ENCODE measurements at regions of chr1 and their contacts with region 1.

Region 1: GRCh38 chr1:16078925-16079656 is 5.6 kb upstream of the FAM131C start:
- DNase-seq: no peak
- H3K4me3 ChIP-seq: no peak overlapping the region
- CTCF ChIP-seq: peak; percentile 96

Region 2: DNA sequence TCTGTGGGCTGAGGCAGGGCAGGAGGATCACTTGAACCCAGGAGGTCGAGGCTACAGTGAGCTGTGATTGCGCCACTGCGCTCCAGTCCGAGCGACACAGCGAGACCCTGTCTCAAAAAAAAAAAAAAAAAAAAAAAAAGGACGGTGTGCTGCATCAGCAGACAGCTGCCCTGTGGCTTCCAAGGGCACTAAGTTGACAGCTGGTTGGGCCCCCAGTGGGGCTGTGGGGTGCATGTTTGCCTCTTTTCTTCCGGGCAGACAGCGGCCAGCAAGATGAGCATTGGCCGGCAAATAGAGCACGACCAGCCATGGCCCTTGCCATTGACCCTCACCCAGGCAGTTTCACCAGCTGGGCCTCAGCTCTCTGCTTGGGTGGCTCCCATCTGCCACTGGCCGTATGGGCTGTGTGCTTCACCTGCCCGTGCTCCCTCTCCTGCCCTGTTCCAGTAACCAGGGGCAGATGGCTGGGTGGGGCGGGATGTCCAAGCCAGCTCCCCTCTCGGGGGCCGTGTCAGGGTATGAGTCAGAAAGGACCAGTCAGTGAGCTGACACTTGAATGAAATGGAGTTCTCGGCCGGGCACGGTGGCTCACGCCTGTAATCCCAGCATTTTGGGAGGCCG is 355.4 kb before region 1 on chr1:
- CTCF ChIA-PET with region 1: no interaction called
- POLR2A ChIA-PET with region 1: no interaction called
- DNase-seq: no peak
- H3K4me3 ChIP-seq: no peak overlapping the region
- CTCF ChIP-seq: no peak

Region 3: DNA sequence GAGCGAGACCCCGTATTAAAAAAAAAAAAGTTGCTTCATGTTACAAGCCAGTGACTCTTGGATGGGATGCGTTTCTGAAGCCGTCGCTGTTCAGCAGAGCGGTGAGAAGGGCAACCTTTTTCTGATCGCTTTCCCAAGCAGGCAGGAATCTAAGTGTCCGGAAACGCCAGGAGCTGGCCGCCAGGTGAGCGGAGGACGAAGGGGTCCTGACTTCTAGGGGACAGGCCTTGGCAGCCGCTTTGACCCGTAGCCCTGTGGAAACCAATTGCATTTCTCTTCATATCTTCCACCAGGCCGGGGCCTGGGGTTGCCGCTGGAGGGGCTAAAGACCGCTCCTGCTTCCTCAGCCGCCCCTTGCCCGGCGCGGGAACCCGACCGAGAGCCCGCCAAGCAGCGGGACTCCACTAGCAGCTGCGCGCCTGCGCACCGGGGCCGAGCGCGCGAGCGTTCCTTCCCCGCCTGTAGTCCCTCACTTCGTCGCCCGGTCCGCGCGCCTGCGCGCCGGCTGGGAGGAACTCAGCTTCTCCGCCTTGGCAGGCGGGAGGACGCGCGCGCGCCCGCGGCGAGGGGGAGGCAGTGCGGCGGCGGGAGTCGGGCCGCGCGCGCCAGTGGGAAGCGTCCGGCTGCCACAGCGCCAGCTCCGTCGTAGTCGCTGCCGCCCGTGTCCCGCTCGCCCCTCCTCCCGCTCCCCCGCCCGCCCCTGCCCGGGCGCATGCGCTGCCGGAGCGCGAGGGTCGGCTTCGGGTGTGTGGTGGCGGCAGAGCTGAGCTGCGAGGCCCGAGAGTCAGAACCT is 231.8 kb before region 1 on chr1 and contains the start of gene SPEN:
- CTCF ChIA-PET with region 1: no interaction called
- POLR2A ChIA-PET with region 1: no interaction called
- DNase-seq: no peak
- H3K4me3 ChIP-seq: peak within 1 kb of the TSS; percentile 92
- CTCF ChIP-seq: no peak

Region 4: DNA sequence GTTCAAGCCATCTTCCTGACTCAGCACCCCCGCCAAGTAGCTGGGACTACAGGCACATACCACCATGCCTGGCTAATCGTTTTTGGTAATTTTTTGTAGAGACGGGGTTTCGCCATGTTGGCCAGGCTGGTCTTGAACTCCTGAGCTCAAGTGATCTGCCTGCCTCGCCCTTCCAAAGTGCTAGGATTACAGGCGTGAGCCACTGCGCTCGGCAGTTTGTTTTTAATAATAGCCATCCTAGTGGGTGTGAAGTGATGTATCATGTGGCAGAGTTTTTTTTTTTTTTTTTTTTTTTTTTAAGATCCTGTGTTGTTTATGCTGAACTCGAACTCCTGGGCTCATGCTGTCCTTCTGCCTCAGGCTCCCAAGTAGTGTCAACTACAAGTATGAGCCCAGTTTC is 179.8 kb before region 1 on chr1:
- CTCF ChIA-PET with region 1: no interaction called
- POLR2A ChIA-PET with region 1: no interaction called
- DNase-seq: no peak
- H3K4me3 ChIP-seq: no peak overlapping the region
- CTCF ChIP-seq: no peak

Region 5: GRCh38 chr1:16009030-16009709 is 69.9 kb before region 1 on chr1:
- CTCF ChIA-PET with region 1: interaction called, 141 read pairs
- POLR2A ChIA-PET with region 1: no interaction called
- DNase-seq: no peak
- H3K4me3 ChIP-seq: no peak overlapping the region
- CTCF ChIP-seq: peak; percentile 92

Region 6: DNA sequence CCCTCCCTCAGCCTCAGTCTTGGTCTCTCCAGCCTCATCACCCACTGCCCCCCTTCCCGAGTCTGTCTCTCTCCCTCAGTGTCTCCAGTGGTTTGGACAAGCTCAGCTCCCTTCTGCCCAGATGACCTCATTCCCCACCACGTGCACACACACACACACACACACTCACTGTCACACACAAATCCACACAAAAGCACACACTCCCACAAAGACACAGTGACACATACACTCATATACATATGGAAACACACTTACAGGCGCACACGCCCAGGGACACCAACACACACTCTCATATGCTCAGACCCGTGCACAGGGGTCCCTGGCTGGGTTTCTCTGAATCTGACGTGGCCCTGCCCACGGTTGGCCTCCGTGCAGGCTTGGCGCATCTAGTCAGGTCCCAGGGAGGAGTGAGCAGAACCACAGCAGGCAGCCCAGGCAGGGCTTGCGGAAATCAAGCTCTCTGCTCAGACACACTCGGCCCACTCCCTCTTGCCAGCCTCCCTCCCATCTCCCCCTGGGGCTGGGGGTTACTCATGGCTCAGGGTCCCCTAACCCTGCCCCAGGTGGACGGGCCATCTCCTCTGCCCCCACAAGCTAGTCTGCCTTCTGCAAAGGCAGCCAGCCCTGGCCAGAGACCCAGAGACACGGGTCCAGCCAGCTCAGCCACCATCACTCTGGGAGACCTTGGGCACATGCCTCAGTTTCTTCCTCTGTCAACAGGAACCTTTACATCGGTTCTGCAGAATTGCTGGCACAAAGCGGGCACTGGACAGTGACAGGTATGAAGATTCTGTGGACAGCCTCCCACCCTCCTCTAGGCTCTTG is 32.9 kb after region 1 on chr1:
- CTCF ChIA-PET with region 1: interaction called, 80 read pairs
- POLR2A ChIA-PET with region 1: no interaction called
- DNase-seq: no peak
- H3K4me3 ChIP-seq: no peak overlapping the region
- CTCF ChIP-seq: no peak

Region 7: GRCh38 chr1:16139473-16139962 is 60.4 kb after region 1 on chr1:
- CTCF ChIA-PET with region 1: interaction called, 217 read pairs
- POLR2A ChIA-PET with region 1: no interaction called
- DNase-seq: no peak
- H3K4me3 ChIP-seq: no peak overlapping the region
- CTCF ChIP-seq: no peak

Region 8: DNA sequence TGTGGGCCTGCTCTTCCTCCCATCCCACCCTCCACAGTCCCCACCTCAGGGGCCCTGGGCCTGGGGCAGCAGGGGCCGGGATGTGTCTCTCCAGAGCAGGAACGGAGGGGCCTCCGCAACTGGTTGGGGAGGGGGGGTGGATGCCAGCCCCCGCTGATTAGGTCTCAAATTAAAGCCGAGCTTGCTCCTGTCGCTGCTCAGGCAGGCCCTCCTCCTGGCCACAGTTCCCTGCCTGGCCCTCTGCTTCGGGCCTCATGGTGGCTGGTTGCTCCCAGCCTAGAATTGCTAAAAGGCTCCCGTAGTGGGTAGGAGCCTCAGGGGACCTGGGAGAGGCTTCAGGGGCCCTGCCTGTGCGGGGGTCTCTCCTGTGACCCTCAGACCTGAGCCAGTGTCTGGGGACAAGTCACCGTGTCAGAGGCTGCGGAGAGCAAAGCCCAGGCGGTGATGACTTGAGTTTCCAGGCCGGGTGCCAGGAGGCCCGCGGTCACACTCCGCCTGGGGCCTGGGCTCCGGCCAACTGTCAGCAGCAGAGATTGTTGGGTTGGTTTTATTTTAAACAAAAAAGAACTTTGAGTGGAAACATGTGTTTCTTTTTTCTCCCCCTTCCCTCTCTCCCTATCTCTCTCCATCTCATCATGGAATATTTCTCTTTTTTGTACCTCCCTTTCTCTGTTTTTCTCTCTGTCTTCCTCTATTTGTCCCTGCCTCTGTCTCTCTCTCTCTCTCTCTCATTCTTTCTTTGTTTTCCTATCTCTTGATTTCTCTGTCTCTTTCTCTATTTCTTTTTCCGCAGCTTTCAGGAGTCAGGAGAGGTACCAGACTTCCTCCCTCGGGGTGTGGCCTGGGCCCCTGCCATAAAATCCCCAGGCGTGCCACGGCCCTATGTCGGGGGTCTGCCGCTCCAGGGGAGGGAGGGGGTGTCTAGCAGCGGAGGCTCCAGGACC is 96.8 kb after region 1 on chr1:
- CTCF ChIA-PET with region 1: interaction called, 1,006 read pairs
- POLR2A ChIA-PET with region 1: no interaction called
- DNase-seq: peak; percentile 45
- H3K4me3 ChIP-seq: no peak overlapping the region; the same call in 1 of the 2 replicates
- CTCF ChIP-seq: no peak

Region 9: DNA sequence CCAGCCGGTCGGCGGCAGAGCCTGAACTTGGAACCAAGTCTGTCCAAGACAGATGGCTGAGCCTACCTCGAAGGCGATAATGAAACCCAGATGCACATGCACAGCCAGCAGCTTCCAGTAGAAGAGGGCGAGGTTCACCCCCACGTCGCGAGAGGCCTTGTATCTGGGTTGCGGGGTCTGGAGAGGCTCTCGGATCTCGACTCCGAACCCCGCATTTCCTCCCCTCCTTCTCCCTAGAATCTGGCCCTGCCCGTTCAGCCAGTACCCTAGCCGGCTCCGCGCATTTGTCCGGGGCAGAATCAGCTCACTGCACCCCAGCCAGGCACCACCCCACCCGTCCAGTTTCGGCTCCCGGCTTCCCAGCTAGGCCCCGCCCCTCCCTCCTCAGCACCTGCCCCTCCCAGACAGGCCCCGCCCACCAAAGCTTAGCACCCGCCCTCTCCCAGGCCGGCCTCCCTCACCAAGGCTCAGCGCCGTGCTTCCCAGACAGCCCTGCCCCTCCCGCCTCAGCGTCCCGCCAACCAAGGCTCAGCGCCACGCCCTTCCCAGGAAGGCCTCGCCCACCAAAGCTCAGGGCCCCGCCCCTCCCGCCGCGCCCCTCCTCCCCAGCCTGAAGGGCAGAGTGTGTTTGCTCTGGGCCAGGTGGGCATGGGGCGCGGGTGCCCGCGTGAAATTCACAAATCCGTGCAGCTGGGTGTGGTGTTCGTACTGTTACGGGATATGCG is 138.1 kb after region 1 on chr1:
- CTCF ChIA-PET with region 1: interaction called, 22 read pairs
- POLR2A ChIA-PET with region 1: no interaction called
- DNase-seq: peak; percentile 34
- H3K4me3 ChIP-seq: peak overlapping the region; percentile 64
- CTCF ChIP-seq: no peak

Region 10: DNA sequence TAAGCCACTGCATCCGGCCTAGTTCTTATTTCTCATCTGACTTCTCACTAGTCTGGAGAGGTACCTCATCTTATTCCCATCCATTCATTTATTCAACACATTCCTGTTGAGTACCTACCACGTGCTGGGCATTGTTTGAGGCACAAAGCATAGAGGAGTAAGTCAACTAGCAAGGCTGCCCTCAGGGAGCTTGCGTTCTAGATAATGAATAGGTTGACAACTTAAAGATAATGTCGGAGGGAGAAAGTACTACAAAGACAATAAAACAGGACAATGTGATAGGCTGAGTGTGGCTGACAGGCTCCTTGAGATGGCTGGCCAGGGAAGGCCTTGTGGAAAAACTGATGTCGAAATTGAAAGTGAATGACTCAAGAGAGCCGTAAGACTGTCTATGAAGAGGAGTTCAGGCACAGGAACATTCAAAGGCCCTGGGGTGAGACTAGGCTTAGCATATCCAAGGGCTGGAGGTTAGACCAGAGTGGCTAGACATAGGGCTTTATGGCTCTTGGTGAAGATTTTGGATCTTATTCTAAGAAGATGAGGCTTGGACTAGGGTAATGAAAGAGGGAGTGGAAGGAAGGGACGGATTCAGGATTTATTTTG is 339.8 kb after region 1 on chr1:
- CTCF ChIA-PET with region 1: no interaction called
- POLR2A ChIA-PET with region 1: no interaction called
- DNase-seq: no peak
- H3K4me3 ChIP-seq: no peak overlapping the region
- CTCF ChIP-seq: no peak

Measured in AG04449 (cell line).